IMR-90 (cell line): ENCODE measurements at regions of chr19 and their contacts with region 1.

Region 1: GRCh38 chr19:3816566-3817218 is 30.5 kb upstream of the MATK start:
- DNase-seq: no peak
- ATAC-seq: no peak
- H3K4me3 ChIP-seq: no peak overlapping the region
- H3K27ac ChIP-seq: no peak overlapping the region
- H3K4me1 ChIP-seq: no peaks in the 10 kb centered on the region
- H3K27me3 ChIP-seq: peaks cover 10% of the 10 kb centered on the region
- CTCF ChIP-seq: no peak
- POLR2A ChIP-seq: no peak
- RAD21 ChIP-seq: no peak

Region 2: GRCh38 chr19:3768745-3769099 is 48.0 kb before region 1 on chr19:
- CTCF ChIA-PET with region 1: no interaction called
- POLR2A ChIA-PET with region 1: interaction called, 11 read pairs
- dilution Hi-C with region 1: no loop called
- in situ Hi-C with region 1: no loop called
- intact Hi-C with region 1: no loop called
- DNase-seq: no peak
- ATAC-seq: no peak
- H3K4me3 ChIP-seq: no peak overlapping the region
- H3K27ac ChIP-seq: no peak overlapping the region
- H3K4me1 ChIP-seq: no peaks in the 10 kb centered on the region
- H3K27me3 ChIP-seq: 0 out of 2 replicates have a peak, but pooled peaks cover 2% of the 10 kb centered on the region
- CTCF ChIP-seq: no peak
- POLR2A ChIP-seq: no peak
- RAD21 ChIP-seq: no peak

Region 3: DNA sequence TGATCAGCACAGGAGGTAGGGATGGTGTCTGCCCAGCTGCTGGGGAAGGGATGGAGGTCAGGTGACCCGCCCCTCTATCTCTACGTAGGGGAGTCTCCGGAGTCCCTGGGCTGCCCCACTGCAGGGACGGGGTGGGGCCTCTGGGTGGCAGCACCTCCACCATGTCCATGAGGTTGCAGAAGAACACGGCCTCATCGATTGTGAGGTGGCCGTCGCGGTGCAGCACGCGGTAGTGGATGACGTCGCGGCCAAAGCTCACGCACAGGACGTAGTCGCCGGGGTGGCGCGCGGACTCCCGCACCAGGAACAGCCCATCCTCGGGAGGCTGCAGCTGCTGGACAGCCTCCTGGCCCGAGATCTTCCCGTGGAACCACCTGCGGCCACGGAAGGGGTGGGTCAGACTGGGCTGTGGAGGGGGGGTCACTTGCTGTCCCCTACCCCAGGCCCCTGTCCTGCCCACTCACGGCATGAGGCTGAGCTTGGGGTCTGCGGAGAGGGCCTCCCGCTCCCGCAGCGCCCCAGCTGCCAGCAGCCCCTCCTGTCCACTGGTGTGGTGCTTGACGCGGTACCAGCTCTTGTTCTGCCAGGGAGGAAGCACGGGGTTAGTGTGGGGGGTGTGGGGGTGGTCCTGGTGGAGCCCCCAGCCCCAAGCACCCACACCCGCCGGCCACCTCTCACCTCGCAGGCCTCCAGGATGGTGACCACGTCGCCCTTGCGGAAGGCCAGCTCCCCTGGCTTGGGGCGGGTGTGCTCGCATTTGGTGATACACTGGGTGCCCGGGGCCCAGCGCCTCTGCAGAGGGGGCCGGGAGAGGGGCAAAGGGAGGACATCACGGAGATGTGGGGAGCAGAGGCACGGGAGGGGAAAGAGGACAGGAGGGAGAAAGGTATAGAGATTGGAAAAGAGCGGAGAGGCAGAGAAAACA is 32.8 kb before region 1 on chr19:
- CTCF ChIA-PET with region 1: no interaction called
- POLR2A ChIA-PET with region 1: no interaction called
- dilution Hi-C with region 1: no loop called
- in situ Hi-C with region 1: no loop called
- intact Hi-C with region 1: no loop called
- DNase-seq: no peak
- ATAC-seq: no peak
- H3K4me3 ChIP-seq: no peak overlapping the region
- H3K27ac ChIP-seq: no peak overlapping the region
- H3K4me1 ChIP-seq: no peaks in the 10 kb centered on the region
- H3K27me3 ChIP-seq: peaks cover 21% of the 10 kb centered on the region
- CTCF ChIP-seq: 0 out of 2 replicates have a peak, but pooled peaks have one; percentile 8
- POLR2A ChIP-seq: no peak
- RAD21 ChIP-seq: no peak